WTC11 (cell line): ENCODE measurements at regions of chr10 and their contacts with region 1.

Region 1: GRCh38 chr10:104308439-104308903 is 29.8 kb downstream of the ITPRIP start:
- DNase-seq: no peak
- ATAC-seq: no peak
- H3K4me3 Mint-ChIP-seq: no peak overlapping the region
- H3K27ac Mint-ChIP-seq: no peak overlapping the region
- H3K4me1 Mint-ChIP-seq: peaks cover 6% of the 10 kb centered on the region
- H3K27me3 Mint-ChIP-seq: no peaks in the 10 kb centered on the region
- CTCF ChIP-seq: no peak

Region 2: DNA sequence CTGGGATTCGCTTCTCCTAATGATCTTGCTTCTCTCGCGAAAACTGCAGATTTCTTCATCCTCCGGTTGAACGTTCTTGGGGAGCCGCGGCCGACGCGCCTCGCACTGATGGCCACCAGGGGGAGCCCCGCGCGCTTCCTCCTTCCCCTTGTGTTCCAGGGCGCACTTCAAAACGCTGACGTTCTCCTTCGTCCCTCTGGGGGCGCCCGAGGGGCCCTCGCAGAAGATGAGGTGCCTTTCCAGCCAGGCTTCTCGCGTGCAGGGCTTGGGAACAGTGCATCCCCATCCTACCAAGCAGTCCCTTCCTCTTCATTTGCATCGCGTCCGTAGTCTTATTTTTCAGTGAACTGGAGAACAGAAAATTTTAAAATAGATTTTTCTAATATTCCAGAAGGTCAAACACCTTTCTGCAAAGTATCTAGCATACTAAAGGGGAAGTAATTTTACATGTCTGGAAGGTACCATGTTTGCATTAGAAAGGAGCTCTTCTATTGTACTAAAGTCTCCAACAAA is 17.0 kb before region 1 on chr10:
- CTCF ChIA-PET with region 1: interaction called, 46 read pairs
- POLR2A ChIA-PET with region 1: interaction called, 3 read pairs
- DNase-seq: peak; percentile 90
- ATAC-seq: peak; percentile 99
- H3K4me3 Mint-ChIP-seq: peak overlapping the region; percentile 40
- H3K27ac Mint-ChIP-seq: no peak overlapping the region
- H3K4me1 Mint-ChIP-seq: peaks cover 23% of the 10 kb centered on the region
- H3K27me3 Mint-ChIP-seq: peaks cover 7% of the 10 kb centered on the region
- CTCF ChIP-seq: peak; percentile 99

Region 3: GRCh38 chr10:104322416-104322782 is 13.9 kb after region 1 on chr10:
- CTCF ChIA-PET with region 1: interaction called, 33 read pairs
- POLR2A ChIA-PET with region 1: no interaction called
- DNase-seq: no peak
- ATAC-seq: no peak
- H3K4me3 Mint-ChIP-seq: no peak overlapping the region
- H3K27ac Mint-ChIP-seq: peak overlapping the region; percentile 48
- H3K4me1 Mint-ChIP-seq: peaks cover 94% of the 10 kb centered on the region
- H3K27me3 Mint-ChIP-seq: no peaks in the 10 kb centered on the region
- CTCF ChIP-seq: no peak

Region 4: DNA sequence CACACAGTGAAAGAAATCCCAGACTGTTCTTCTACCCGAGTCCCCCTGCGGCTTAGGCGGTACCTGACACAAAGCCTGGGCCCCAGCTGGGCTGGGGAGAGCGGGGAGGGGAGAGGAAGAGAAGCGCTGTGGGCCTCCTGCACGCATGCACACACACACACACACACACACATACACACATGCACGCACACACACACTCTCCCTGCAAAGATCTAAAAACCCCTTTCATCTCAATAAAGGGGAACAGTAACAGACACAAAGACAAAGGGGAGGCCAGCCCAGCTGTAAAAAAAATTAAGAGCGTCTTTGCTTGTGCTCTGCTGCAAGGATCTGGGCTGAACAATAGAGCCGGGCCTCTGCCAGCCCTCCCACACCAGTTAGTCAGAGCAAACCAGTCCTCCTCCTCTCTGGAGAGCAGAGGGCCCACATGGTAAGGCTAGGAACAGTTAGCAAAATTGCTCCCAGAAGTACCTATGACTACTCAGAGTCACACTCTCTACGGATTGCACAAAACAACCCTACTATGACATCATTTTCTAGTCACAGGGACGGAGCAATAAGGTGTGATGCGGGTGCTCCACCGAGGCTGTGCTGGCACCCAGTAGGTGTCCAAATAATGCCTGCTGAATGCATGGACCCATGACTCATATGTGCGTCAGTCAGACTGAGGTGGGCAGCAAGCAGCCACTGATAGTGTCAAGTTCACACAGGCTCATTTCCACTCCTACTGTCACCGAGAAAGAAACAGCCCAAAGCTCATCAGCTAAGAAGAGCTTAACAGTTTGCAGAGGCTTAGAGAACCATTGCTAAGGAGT is 20.6 kb after region 1 on chr10:
- CTCF ChIA-PET with region 1: interaction called, 19 read pairs
- POLR2A ChIA-PET with region 1: no interaction called
- DNase-seq: no peak
- ATAC-seq: peak; percentile 40
- H3K4me3 Mint-ChIP-seq: peak overlapping the region; percentile 52
- H3K27ac Mint-ChIP-seq: peak overlapping the region; percentile 98
- H3K4me1 Mint-ChIP-seq: peaks cover 97% of the 10 kb centered on the region
- H3K27me3 Mint-ChIP-seq: no peaks in the 10 kb centered on the region
- CTCF ChIP-seq: no peak

Region 5: DNA sequence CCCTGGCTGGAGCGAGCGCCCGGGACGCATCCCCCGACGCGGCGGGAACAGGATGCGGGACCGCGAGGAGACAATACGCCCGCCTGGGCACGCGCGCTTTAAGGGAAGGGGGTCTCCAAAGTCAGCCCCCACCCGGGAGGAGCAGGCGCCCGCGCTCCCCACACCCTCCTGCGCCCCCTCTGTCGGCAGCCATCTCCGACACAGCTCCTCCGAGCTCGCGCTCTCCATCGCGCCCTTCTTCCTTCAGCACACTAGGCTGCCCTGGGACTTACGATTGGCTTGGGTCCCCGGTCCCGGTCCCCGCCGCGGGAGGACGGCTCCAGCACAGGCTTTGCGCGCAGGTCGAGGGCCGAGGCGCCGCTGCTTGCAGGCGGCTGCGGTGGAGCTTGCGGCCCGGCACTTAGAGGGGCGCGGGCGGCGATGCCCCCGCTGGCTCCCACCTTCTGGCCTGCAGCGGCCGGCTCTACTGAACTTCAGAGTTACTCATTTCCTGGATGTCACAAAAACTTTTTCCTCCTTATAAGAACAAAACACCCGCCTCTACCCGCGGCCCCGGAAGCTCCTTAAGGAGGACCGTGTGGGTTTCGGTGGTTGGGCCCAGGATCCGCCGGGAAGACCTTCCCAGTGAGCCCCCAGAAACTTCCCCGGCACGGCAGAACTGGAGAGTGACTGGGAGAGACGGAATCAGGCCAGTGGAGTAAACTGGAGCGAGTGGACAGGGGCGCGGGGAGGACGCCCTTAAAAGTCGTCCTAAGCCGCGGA is 29.7 kb after region 1 on chr10 and contains the start of gene ITPRIP:
- CTCF ChIA-PET with region 1: interaction called, 20 read pairs
- POLR2A ChIA-PET with region 1: interaction called, 9 read pairs
- DNase-seq: peak; percentile 68
- ATAC-seq: peak; percentile 63
- H3K4me3 Mint-ChIP-seq: peak within 1 kb of the TSS; percentile 93
- H3K27ac Mint-ChIP-seq: peak within 1 kb of the TSS; percentile 99
- H3K4me1 Mint-ChIP-seq: peaks cover 60% of the 10 kb centered on the region
- H3K27me3 Mint-ChIP-seq: no peaks in the 10 kb centered on the region
- CTCF ChIP-seq: no peak
- total RNA-seq, gene ITPRIP: 13.0 to 16.8 TPM (median 13.4 TPM) in 3 replicates

Region 6: GRCh38 chr10:104345941-104346340 is 37.5 kb after region 1 on chr10:
- CTCF ChIA-PET with region 1: interaction called, 55 read pairs
- POLR2A ChIA-PET with region 1: no interaction called
- DNase-seq: no peak
- ATAC-seq: no peak
- H3K4me3 Mint-ChIP-seq: no peak overlapping the region
- H3K27ac Mint-ChIP-seq: peak overlapping the region; percentile 37
- H3K4me1 Mint-ChIP-seq: peaks cover 9% of the 10 kb centered on the region
- H3K27me3 Mint-ChIP-seq: no peaks in the 10 kb centered on the region
- CTCF ChIP-seq: no peak

Region 7: DNA sequence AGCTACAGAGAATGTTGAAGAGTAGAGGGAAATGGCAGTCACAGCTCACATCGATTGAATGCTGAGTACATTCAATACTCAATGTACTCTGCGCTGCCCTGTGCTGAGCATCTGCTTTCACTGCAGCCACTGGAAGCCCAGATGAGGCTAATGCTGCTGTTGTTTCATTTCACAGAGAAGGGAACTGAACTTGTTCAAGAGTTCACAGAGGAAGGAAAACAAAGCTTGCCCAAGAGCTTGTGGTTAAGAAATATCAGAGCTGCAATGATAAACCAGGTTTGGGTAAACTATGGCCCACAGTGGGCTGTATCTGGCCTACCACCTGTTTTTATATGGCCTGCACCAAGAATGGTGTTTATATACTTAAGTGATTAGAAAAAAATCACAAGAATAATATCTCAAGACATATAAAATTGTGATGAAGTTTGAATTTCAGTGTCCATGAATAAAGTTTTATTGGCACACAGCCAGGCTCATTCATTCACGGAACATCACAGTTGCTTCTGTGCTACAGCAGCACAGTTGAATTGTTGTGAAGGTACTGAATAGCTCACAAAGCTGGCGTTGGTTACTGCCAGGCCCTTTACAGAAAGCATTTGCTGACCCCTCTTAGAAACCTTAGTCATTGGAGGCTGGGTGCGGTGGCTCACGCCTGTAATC is 109.3 kb after region 1 on chr10:
- CTCF ChIA-PET with region 1: no interaction called
- POLR2A ChIA-PET with region 1: no interaction called
- DNase-seq: no peak
- ATAC-seq: no peak
- H3K4me3 Mint-ChIP-seq: no peak overlapping the region
- H3K27ac Mint-ChIP-seq: no peak overlapping the region
- H3K4me1 Mint-ChIP-seq: peaks cover 19% of the 10 kb centered on the region
- H3K27me3 Mint-ChIP-seq: no peaks in the 10 kb centered on the region
- CTCF ChIP-seq: no peak

Region 8: GRCh38 chr10:104622598-104623209 is 314.2 kb after region 1 on chr10:
- CTCF ChIA-PET with region 1: interaction called, 15 read pairs
- POLR2A ChIA-PET with region 1: no interaction called
- DNase-seq: peak; percentile 68
- ATAC-seq: peak; percentile 99
- H3K4me3 Mint-ChIP-seq: no peak overlapping the region
- H3K27ac Mint-ChIP-seq: no peak overlapping the region
- H3K4me1 Mint-ChIP-seq: no peaks in the 10 kb centered on the region
- H3K27me3 Mint-ChIP-seq: peaks cover 2% of the 10 kb centered on the region
- CTCF ChIP-seq: peak; percentile 56